ENCODE measurements at regions of chrX and their contacts with region 1.

Region 1: DNA sequence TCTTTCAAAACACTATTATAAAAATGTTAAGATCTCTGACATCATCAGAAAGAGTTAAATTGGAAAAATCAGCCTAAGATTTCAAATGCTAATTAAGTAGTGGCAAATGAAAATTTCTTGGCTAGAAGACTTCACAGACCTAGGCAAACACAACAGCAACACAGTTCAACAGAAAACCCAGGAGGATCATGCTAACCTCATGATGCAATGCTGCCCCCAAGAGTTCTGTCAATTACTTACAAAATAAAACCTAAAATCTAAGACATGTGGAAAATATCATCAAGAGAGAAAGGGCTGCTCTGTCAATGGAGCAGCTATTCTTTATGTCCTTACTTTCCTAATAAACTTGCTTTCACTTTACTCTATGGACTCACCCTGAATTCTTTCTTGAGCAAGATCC is 21.0 kb downstream of the S100G start:
- DNase-seq: peak in 7 of 9 donors; percentile 13 to 57 (median 37)
- ATAC-seq: peak; percentile 64
- H3K4me3 ChIP-seq: no peak overlapping the region
- H3K4me3 Mint-ChIP-seq: no peak overlapping the region
- H3K27ac ChIP-seq: no peak overlapping the region
- H3K27ac Mint-ChIP-seq: peak overlapping the region in 1 of 9 donors; percentile 32
- H3K4me1 ChIP-seq: no peaks in the 10 kb centered on the region
- H3K4me1 Mint-ChIP-seq: peaks cover 0 to 5% (median 0%) of the 10 kb centered on the region in 7 donors
- H3K27me3 ChIP-seq: no peaks in the 10 kb centered on the region
- H3K27me3 Mint-ChIP-seq: no peaks in the 10 kb centered on the region

Region 2: DNA sequence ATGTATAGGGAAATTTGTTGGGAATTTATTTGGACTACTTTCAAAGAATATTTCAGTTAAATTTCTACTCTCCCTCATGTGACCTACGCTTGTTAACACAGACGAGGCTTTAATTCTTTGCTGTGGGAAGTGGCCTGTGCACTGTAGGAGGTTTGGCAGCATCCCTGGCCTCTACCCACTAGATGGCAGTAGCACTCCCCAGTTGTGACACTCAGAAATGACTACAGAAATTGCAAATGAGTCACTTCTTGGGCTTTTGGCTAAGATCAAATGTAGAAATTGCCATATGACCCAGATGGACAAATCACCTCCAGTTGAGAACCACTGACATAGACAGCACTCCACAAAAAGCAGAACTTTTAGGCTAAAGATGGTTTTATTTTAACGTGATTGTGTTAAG is 1200.0 kb before region 1 on chrX:
- CTCF ChIA-PET with region 1: no interaction called
- POLR2A ChIA-PET with region 1: no interaction called
- intact Hi-C with region 1: loop called in 1 of 2 experiments (anchors 10 kb)
- DNase-seq: peak in 8 of 9 donors; percentile 7 to 53 (median 38)
- ATAC-seq: peak; percentile 80
- H3K4me3 ChIP-seq: no peak overlapping the region
- H3K4me3 Mint-ChIP-seq: no peak overlapping the region
- H3K27ac ChIP-seq: no peak overlapping the region
- H3K27ac Mint-ChIP-seq: no peak overlapping the region
- H3K4me1 ChIP-seq: no peaks in the 10 kb centered on the region
- H3K4me1 Mint-ChIP-seq: peaks cover 0 to 4% (median 0%) of the 10 kb centered on the region in 7 donors
- H3K27me3 ChIP-seq: no peaks in the 10 kb centered on the region
- H3K27me3 Mint-ChIP-seq: no peaks in the 10 kb centered on the region

Region 3: GRCh38 chrX:16278927-16279326 is 392.1 kb before region 1 on chrX:
- CTCF ChIA-PET with region 1: no interaction called
- POLR2A ChIA-PET with region 1: no interaction called
- intact Hi-C with region 1: loop called in 1 of 2 experiments (anchors 1 kb)
- DNase-seq: peak in 4 of 9 donors; percentile 1 to 10 (median 3)
- ATAC-seq: no peak
- H3K4me3 ChIP-seq: no peak overlapping the region
- H3K4me3 Mint-ChIP-seq: no peak overlapping the region
- H3K27ac ChIP-seq: no peak overlapping the region
- H3K27ac Mint-ChIP-seq: no peak overlapping the region
- H3K4me1 ChIP-seq: no peaks in the 10 kb centered on the region
- H3K4me1 Mint-ChIP-seq: no peaks in the 10 kb centered on the region
- H3K27me3 ChIP-seq: no peaks in the 10 kb centered on the region
- H3K27me3 Mint-ChIP-seq: peaks cover 3 to 16% (median 11%) of the 10 kb centered on the region in 5 donors

Region 4: DNA sequence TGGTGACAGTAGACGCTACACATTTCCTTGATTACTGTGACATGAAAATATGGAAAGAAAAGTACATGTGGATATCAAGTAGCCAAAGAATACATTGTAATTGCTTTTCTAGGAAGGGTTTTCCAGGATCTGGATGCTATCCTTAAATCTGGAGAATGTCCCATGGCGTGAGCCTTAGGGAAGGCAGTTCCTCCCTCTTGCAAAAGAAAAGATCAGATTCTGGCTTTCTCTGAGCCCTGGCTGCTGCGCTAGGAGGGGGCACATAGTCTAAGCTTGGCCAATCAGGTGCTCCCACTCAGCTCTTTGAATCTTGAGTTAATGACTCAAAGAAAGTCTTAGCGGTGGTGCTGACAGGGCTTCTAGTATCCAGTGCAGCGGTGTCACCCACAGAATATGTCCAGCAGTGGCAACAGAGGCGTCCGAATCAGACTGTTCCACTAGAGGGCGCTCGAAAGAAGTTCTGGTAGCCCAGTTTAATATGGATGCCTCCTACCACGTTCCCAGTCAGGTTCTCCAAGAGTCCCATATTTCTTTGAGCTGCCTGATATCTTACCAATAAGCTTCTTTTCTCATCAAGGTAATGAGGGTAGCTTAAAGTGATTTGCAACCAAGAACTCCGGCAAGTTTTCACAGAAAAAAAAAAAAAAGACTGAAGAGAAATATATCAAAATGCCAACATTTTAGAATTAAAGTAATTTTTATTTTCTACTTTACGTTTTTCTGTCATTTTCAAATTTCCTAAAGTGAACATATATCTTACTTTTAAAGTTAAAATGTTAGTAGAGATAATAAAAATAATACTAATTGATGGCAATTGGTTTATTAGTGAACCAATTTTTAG is 234.4 kb before region 1 on chrX:
- CTCF ChIA-PET with region 1: interaction called, 3 read pairs
- POLR2A ChIA-PET with region 1: no interaction called
- intact Hi-C with region 1: loop called (anchors 1 kb)
- DNase-seq: peak; percentile 19 to 55 (median 44)
- ATAC-seq: peak; percentile 78
- H3K4me3 ChIP-seq: no peak overlapping the region
- H3K4me3 Mint-ChIP-seq: peak overlapping the region in 1 of 10 donors; percentile 44
- H3K27ac ChIP-seq: no peak overlapping the region
- H3K27ac Mint-ChIP-seq: peak overlapping the region in 1 of 9 donors; percentile 0
- H3K4me1 ChIP-seq: peaks cover 0 to 15% of the 10 kb centered on the region in 2 donors
- H3K4me1 Mint-ChIP-seq: peaks cover 3 to 19% (median 15%) of the 10 kb centered on the region in 7 donors
- H3K27me3 ChIP-seq: no peaks in the 10 kb centered on the region
- H3K27me3 Mint-ChIP-seq: no peaks in the 10 kb centered on the region

Region 5: DNA sequence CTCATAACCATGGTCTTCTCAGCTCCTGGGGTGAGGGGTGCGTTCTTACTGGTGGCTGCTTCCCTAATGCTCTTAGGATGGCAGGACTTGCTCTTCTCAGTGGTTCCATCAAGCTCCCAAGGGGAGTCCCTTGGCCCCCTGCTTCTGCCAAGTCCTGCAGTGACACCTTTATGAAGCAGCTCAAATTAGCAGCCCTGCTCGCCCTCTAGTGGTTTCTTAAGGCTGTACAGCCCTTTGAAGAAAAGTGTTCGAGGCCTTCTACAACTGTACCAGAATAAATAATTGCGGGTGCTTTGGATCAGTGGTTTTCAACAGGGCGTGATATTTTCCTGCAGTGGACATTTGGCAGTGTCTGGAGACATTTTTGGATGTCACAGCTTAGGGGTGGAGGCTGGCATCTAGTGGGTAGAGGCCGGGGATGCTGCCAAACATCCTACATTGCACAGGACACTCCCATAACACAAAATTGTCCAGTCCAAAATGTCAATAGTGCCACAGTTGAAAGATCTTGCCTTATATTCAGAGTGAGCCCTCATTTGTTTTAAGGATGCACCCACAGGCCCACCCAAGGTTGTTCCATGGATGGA is 225.7 kb before region 1 on chrX:
- CTCF ChIA-PET with region 1: no interaction called
- POLR2A ChIA-PET with region 1: no interaction called
- intact Hi-C with region 1: loop called in 1 of 2 experiments (anchors 2 kb)
- DNase-seq: peak; percentile 6 to 57 (median 29)
- ATAC-seq: peak; percentile 72
- H3K4me3 ChIP-seq: no peak overlapping the region
- H3K4me3 Mint-ChIP-seq: no peak overlapping the region
- H3K27ac ChIP-seq: no peak overlapping the region
- H3K27ac Mint-ChIP-seq: no peak overlapping the region
- H3K4me1 ChIP-seq: peaks cover 0 to 17% of the 10 kb centered on the region in 2 donors
- H3K4me1 Mint-ChIP-seq: peaks cover 0 to 39% (median 24%) of the 10 kb centered on the region in 7 donors
- H3K27me3 ChIP-seq: no peaks in the 10 kb centered on the region
- H3K27me3 Mint-ChIP-seq: peaks cover 0 to 3% (median 0%) of the 10 kb centered on the region in 5 donors